Activated CD8-positive, alpha-beta T cell treated with anti-CD3 and anti-CD28 coated beads for 36 hours (primary cell): ENCODE measurements at regions of chr17 and their contacts with region 1.

Region 1: GRCh38 chr17:32519228-32520103 is 32.7 kb downstream of the CDK5R1 start:
- DNase-seq: peak; percentile 71
- ATAC-seq: peak; percentile 4
- H3K4me3 Mint-ChIP-seq: peak overlapping the region; percentile 74
- H3K27ac Mint-ChIP-seq: peak overlapping the region; percentile 91
- H3K4me1 Mint-ChIP-seq: peaks cover 84% of the 10 kb centered on the region
- H3K27me3 Mint-ChIP-seq: no peaks in the 10 kb centered on the region
- CTCF ChIP-seq: no peak

Region 2: GRCh38 chr17:32491371-32492263 is 27.8 kb before region 1 on chr17:
- CTCF ChIA-PET with region 1: interaction called, 42 read pairs
- POLR2A ChIA-PET with region 1: interaction called, 43 read pairs
- intact Hi-C with region 1: loop called (anchors 5 kb)
- DNase-seq: peak; percentile 74
- ATAC-seq: peak; percentile 53
- H3K4me3 Mint-ChIP-seq: peak overlapping the region; percentile 95
- H3K27ac Mint-ChIP-seq: peak overlapping the region; percentile 82
- H3K4me1 Mint-ChIP-seq: peaks cover 67% of the 10 kb centered on the region
- H3K27me3 Mint-ChIP-seq: no peaks in the 10 kb centered on the region
- CTCF ChIP-seq: no peak

Region 3: GRCh38 chr17:32503251-32504165 is 16.0 kb before region 1 on chr17:
- CTCF ChIA-PET with region 1: interaction called, 10 read pairs
- POLR2A ChIA-PET with region 1: interaction called, 9 read pairs
- intact Hi-C with region 1: no loop called
- DNase-seq: peak; percentile 74
- ATAC-seq: peak; percentile 93
- H3K4me3 Mint-ChIP-seq: peak overlapping the region; percentile 44
- H3K27ac Mint-ChIP-seq: peak overlapping the region; percentile 91
- H3K4me1 Mint-ChIP-seq: peaks cover 60% of the 10 kb centered on the region
- H3K27me3 Mint-ChIP-seq: no peaks in the 10 kb centered on the region
- CTCF ChIP-seq: no peak

Region 4: DNA sequence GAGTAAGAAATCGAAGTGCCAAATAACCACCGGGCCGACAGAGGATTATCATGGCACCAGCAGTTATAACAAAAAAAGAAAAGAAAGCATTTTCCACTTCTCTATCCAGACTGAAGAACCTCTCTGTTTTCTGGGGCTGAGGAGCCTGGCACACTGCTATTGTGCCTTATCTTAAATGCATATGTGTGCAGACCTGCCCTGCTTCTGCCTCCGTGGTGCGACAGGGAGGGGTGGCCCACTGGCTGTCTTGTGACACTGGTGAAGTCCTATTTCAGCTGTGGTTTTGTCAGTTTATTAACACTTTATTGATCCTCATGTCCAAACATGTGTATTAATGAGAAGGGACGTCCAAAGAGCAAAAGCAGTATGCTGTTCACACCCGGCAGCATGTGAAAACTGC is 22.7 kb after region 1 on chr17:
- CTCF ChIA-PET with region 1: no interaction called
- POLR2A ChIA-PET with region 1: no interaction called
- intact Hi-C with region 1: no loop called
- DNase-seq: no peak
- ATAC-seq: no peak
- H3K4me3 Mint-ChIP-seq: no peak overlapping the region
- H3K27ac Mint-ChIP-seq: no peak overlapping the region
- H3K4me1 Mint-ChIP-seq: peaks cover under 1% of the 10 kb centered on the region
- H3K27me3 Mint-ChIP-seq: no peaks in the 10 kb centered on the region
- CTCF ChIP-seq: no peak